Activated naive CD4-positive, alpha-beta T cell treated with anti-CD3 and anti-CD28 coated beads for 36 hours (primary cell): ENCODE measurements at regions of chr7 and their contacts with region 1.

Region 1: GRCh38 chr7:114865564-114865963 is 56.3 kb upstream of the MDFIC start:
- DNase-seq: peak; percentile 80
- H3K4me3 Mint-ChIP-seq: no peak overlapping the region
- H3K27ac Mint-ChIP-seq: no peak overlapping the region
- H3K4me1 Mint-ChIP-seq: peaks cover 7% of the 10 kb centered on the region
- H3K27me3 Mint-ChIP-seq: no peaks in the 10 kb centered on the region

Region 2: GRCh38 chr7:114026486-114027089 is 839.0 kb before region 1 on chr7:
- CTCF ChIA-PET with region 1: no interaction called
- intact Hi-C with region 1: loop called (anchors 2 kb)
- DNase-seq: no peak
- H3K4me3 Mint-ChIP-seq: no peak overlapping the region
- H3K27ac Mint-ChIP-seq: no peak overlapping the region
- H3K4me1 Mint-ChIP-seq: no peaks in the 10 kb centered on the region
- H3K27me3 Mint-ChIP-seq: peaks cover 2% of the 10 kb centered on the region

Region 3: GRCh38 chr7:114922016-114922651 is 56.6 kb after region 1 on chr7 and contains the start of gene MDFIC:
- CTCF ChIA-PET with region 1: interaction called, 12 read pairs
- intact Hi-C with region 1: loop called (anchors 1 kb)
- DNase-seq: peak; percentile 76
- H3K4me3 Mint-ChIP-seq: peak within 1 kb of the TSS; percentile 98
- H3K27ac Mint-ChIP-seq: peak within 1 kb of the TSS; percentile 99
- H3K4me1 Mint-ChIP-seq: peaks cover 63% of the 10 kb centered on the region
- H3K27me3 Mint-ChIP-seq: no peaks in the 10 kb centered on the region
- total RNA-seq, gene MDFIC: 79.4 to 93.1 TPM

Region 4: DNA sequence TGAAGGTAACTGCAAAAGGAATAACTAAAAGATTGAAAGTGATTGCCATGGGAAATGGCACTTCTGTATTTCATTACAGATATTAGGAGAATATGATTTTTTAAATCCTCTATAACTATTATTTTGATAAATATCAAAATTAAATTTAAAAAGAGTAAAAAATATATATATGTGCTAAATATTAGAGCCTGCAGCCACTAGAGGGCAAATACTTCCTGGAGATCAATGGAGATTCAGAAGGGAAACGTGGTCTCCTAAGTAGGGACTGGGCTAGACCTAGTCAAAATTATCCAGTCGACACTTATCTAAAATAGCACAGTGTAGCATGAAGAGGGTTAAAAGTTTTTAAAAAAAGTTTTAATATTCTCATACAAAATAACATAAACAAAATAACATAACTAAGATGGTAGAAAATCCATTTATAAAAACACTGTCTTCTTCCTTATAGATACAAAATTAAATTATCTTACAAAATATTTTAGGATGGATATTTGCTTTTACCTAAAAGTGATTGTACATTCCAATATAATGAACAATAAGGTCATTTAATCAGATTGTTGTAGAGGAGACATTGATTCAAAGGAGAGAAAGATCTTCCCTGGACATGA is 490.7 kb after region 1 on chr7:
- CTCF ChIA-PET with region 1: interaction called, 3 read pairs
- intact Hi-C with region 1: loop called (anchors 10 kb)
- DNase-seq: no peak
- H3K4me3 Mint-ChIP-seq: no peak overlapping the region
- H3K27ac Mint-ChIP-seq: no peak overlapping the region
- H3K4me1 Mint-ChIP-seq: peaks cover 2% of the 10 kb centered on the region
- H3K27me3 Mint-ChIP-seq: peaks cover 2% of the 10 kb centered on the region

Region 5: GRCh38 chr7:115679976-115680375 is 814.4 kb after region 1 on chr7:
- CTCF ChIA-PET with region 1: no interaction called
- intact Hi-C with region 1: loop called (anchors 1 kb)
- DNase-seq: peak; percentile 6
- H3K4me3 Mint-ChIP-seq: no peak overlapping the region
- H3K27ac Mint-ChIP-seq: no peak overlapping the region
- H3K4me1 Mint-ChIP-seq: no peaks in the 10 kb centered on the region
- H3K27me3 Mint-ChIP-seq: no peaks in the 10 kb centered on the region

Region 6: DNA sequence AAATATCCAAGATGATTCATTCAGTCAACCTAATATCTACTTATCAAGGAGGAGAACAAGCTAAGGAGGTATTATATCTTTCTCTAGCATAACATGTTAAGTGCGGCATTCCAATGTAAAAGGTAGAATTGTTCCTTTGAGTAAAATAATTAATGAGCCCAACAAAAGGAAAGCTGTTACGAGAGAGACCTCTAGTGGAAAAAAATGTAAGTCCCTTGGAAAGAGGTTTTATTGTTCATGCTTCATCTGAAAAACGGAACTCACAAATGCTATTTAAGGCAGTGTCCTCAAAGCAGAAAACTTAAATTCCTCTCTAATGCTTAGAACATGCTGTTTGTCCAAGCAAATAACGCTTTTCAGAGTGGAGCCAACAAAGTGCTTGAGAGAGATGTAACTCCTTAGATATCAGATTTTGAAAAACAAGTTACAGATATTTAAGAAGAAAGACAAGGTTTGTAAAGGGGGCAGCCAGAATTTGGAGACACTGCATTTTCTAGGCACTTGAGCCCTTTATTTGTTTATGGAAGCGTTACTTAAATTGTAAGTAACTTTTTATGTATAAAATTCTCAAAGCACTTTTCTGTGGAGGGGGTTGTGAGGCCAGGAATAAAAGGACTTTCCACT is 1045.1 kb after region 1 on chr7:
- CTCF ChIA-PET with region 1: interaction called, 3 read pairs
- intact Hi-C with region 1: loop called (anchors 1 kb)
- DNase-seq: no peak
- H3K4me3 Mint-ChIP-seq: no peak overlapping the region
- H3K27ac Mint-ChIP-seq: no peak overlapping the region
- H3K4me1 Mint-ChIP-seq: no peaks in the 10 kb centered on the region
- H3K27me3 Mint-ChIP-seq: peaks cover 8% of the 10 kb centered on the region